ENCODE measurements at regions of chr1 and their contacts with region 1.

Region 1: GRCh38 chr1:67053785-67054772 is at the start of gene SLC35D1:
- DNase-seq: peak; percentile 81
- H3K4me3 Mint-ChIP-seq: peak within 1 kb of the TSS; percentile 81
- H3K27ac Mint-ChIP-seq: peak within 1 kb of the TSS; percentile 84
- H3K4me1 Mint-ChIP-seq: peaks cover 31% of the 10 kb centered on the region
- H3K27me3 Mint-ChIP-seq: peaks cover 2% of the 10 kb centered on the region
- total RNA-seq, gene SLC35D1: 14.2 to 15.7 TPM

Region 2: DNA sequence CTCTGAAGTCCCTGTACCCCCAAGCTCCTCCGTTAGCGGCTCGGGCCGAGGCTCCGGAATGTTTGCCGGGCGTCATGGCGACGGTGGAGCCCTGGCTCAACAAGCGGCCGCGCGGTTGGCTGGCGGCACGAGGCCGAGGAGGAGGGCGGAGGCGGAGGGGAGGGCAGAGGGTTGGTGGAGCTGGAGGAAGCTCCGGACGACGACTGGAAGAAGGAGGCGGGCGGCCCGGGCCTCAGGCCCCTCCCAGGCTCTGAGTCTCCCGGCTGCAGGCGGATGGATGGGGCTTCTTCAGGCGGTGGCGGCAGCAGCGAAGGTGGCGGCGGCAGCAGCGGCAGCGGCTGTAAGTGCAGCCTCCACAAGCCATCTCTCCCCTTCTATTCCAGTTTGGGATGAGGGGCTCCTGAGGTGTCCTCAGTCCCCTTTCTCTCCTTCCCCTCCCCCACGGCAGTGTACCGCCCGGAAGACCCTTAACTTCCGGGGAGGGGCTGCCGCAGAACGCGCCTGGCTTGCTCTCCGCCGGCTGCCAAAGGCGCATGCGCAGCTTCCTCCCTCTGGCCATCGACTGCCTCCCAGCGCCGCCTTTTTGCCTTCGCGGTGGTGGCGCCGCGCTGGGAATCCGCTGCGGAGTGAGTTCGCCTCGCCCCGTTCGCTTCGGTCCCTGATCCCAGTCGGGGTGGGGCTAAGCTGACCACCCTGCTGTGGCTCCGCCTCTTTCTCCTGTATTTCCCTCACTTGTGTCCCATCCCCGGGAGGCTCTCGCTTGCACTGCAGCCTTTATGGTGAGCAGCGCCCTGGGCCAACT is 129.1 kb before region 1 on chr1 and contains the starts of genes DNAI4 and MIER1:
- CTCF ChIA-PET with region 1: interaction called, 7 read pairs
- POLR2A ChIA-PET with region 1: interaction called, 23 read pairs
- DNase-seq: peak; percentile 99
- H3K4me3 Mint-ChIP-seq: peak within 1 kb of the TSS; percentile 91
- H3K27ac Mint-ChIP-seq: peak within 1 kb of the TSS; percentile 89
- H3K4me1 Mint-ChIP-seq: peaks cover 49% of the 10 kb centered on the region
- H3K27me3 Mint-ChIP-seq: no peaks in the 10 kb centered on the region
- total RNA-seq, gene DNAI4: 1.4 to 2.7 TPM
- total RNA-seq, gene MIER1: 61.7 to 62.0 TPM

Region 3: DNA sequence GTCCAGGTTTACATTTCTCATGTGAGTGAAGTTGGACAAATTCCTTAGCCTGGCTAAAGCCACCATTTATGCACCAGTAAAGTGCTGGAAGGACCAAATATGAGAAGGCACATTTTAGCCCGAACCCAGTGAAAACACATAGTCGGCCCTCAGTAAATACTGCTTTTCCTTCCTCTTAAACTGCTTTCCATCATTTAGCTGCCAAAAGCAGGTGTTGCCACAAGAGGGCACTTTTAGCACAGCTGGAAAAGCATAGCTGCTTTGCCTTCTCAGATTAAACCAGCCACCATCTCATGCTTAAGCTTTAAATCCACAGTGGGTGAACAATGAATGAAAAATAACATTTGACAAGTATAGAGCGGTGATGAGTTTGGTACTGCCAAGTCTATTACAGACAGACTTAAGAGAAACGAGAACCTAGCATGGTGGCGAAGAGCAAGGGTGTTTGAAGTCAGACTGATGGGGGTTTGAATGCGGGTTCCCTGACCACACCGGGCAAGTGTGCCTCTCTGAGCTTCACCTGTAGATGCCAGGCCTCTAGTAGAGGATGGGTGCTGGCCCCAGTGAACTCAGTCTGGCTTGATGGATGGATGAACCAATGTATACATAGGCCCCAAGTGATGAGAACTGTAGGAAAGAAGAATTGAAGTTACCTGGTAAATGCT is 57.9 kb before region 1 on chr1:
- CTCF ChIA-PET with region 1: interaction called, 17 read pairs
- POLR2A ChIA-PET with region 1: interaction called, 7 read pairs
- DNase-seq: peak; percentile 72
- H3K4me3 Mint-ChIP-seq: no peak overlapping the region
- H3K27ac Mint-ChIP-seq: no peak overlapping the region
- H3K4me1 Mint-ChIP-seq: peaks cover 19% of the 10 kb centered on the region
- H3K27me3 Mint-ChIP-seq: no peaks in the 10 kb centered on the region

Region 4: GRCh38 chr1:67142931-67143330 is 88.9 kb after region 1 on chr1:
- CTCF ChIA-PET with region 1: no interaction called
- POLR2A ChIA-PET with region 1: no interaction called
- DNase-seq: no peak
- H3K4me3 Mint-ChIP-seq: no peak overlapping the region
- H3K27ac Mint-ChIP-seq: no peak overlapping the region
- H3K4me1 Mint-ChIP-seq: peaks cover 29% of the 10 kb centered on the region
- H3K27me3 Mint-ChIP-seq: peaks cover 6% of the 10 kb centered on the region

Region 5: DNA sequence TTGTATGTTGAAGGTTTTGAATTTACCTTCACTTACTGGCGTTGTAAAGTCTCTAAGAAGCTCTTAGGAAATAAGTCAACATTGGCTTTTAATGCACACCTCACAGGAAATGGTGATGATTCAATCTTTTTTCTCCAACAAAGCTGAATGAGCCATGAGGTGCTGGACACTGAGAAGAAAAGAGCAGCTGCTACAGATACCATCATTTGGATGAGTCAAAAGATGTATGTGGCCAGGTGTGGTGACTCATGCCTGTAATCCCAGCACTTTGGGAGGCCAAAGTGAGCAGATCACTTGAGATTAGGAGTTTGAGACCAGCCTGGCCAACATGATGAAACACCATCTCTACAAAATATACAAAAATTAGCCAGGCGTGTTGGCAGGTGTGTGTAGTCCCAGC is 108.9 kb after region 1 on chr1:
- CTCF ChIA-PET with region 1: no interaction called
- POLR2A ChIA-PET with region 1: interaction called, 13 read pairs
- DNase-seq: peak; percentile 71
- H3K4me3 Mint-ChIP-seq: peak overlapping the region; percentile 1
- H3K27ac Mint-ChIP-seq: peak overlapping the region; percentile 81
- H3K4me1 Mint-ChIP-seq: peaks cover 44% of the 10 kb centered on the region
- H3K27me3 Mint-ChIP-seq: peaks cover 1% of the 10 kb centered on the region

Measured in activated CD4-positive, alpha-beta memory T cell treated with anti-CD3 and anti-CD28 coated beads, Interleukin-2, amount 10 ng/mL, durations not matched to agents 7 days and 5 days (primary cell).